Panc1 (cell line): ENCODE measurements at regions of chr5 and their contacts with region 1.

Region 1: DNA sequence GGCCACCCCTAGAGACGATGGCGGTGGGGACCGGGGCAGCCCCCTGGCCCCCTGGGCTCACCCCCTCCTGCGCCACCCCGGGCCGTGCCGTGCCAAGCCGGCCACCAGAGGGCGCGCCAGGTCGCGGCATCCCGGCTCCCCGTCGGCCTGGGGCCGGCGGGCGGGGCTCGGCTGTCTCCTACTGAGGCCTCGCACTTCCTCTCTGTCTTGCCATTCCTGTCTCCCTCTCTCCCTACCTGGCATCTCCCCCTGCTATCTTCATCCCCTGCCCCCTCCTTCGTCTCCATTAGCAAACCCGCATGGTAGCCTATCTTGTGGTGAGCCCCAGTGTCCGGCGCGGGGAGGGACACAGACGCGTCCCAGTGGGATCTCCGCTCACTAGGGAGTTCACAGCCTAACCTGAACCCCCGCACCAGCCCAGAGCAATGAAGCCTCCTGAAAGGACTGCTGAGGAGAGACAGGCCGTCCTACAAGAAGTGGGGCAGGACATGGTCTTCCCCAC is 29.8 kb upstream of the FABP6 start:
- DNase-seq: no peak
- ATAC-seq: peak; percentile 99
- H3K4me3 ChIP-seq: peak overlapping the region; percentile 42 to 62
- H3K27ac ChIP-seq: peak overlapping the region; percentile 80
- H3K4me1 ChIP-seq: peaks cover 4% of the 10 kb centered on the region
- H3K27me3 ChIP-seq: no peaks in the 10 kb centered on the region
- CTCF ChIP-seq: peak; percentile 98

Region 2: DNA sequence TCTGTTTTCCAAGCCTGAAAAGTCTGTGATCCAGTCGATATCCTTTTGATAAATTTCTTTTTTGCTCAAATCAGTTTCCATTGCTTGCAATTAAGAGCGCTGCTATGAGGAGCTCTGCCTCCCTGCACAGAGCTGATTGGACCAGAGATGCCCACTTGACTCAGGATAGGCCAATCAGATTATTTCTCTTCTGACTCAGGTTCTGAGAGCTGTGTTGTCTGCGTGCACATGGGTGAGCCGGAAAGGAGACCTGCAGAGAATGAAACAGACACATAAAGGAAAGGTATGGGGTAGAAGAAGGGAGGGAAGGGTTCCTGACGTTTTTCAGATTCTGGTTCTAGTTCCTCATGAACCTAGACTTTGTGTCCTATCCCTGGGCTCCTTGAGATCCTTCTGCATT is 14.1 kb after region 1 on chr5:
- CTCF ChIA-PET with region 1: no interaction called
- POLR2A ChIA-PET with region 1: interaction called, 12 read pairs
- in situ Hi-C with region 1: no loop called
- intact Hi-C with region 1: no loop called
- DNase-seq: no peak
- ATAC-seq: peak; percentile 47; the same call in 1 of the 2 replicates
- H3K4me3 ChIP-seq: no peak overlapping the region
- H3K27ac ChIP-seq: no peak overlapping the region
- H3K4me1 ChIP-seq: no peaks in the 10 kb centered on the region
- H3K27me3 ChIP-seq: no peaks in the 10 kb centered on the region
- CTCF ChIP-seq: no peak

Region 3: GRCh38 chr5:160342403-160342941 is 143.0 kb after region 1 on chr5:
- CTCF ChIA-PET with region 1: interaction called, 8 read pairs
- POLR2A ChIA-PET with region 1: no interaction called
- in situ Hi-C with region 1: no loop called
- intact Hi-C with region 1: loop called (anchors 1 kb)
- DNase-seq: no peak
- ATAC-seq: no peak; the same call in 1 of the 2 replicates
- H3K4me3 ChIP-seq: no peak overlapping the region
- H3K27ac ChIP-seq: no peak overlapping the region; the same call in 1 of the 2 replicates
- H3K4me1 ChIP-seq: peaks cover 4% of the 10 kb centered on the region
- H3K27me3 ChIP-seq: no peaks in the 10 kb centered on the region
- CTCF ChIP-seq: no peak

Region 4: DNA sequence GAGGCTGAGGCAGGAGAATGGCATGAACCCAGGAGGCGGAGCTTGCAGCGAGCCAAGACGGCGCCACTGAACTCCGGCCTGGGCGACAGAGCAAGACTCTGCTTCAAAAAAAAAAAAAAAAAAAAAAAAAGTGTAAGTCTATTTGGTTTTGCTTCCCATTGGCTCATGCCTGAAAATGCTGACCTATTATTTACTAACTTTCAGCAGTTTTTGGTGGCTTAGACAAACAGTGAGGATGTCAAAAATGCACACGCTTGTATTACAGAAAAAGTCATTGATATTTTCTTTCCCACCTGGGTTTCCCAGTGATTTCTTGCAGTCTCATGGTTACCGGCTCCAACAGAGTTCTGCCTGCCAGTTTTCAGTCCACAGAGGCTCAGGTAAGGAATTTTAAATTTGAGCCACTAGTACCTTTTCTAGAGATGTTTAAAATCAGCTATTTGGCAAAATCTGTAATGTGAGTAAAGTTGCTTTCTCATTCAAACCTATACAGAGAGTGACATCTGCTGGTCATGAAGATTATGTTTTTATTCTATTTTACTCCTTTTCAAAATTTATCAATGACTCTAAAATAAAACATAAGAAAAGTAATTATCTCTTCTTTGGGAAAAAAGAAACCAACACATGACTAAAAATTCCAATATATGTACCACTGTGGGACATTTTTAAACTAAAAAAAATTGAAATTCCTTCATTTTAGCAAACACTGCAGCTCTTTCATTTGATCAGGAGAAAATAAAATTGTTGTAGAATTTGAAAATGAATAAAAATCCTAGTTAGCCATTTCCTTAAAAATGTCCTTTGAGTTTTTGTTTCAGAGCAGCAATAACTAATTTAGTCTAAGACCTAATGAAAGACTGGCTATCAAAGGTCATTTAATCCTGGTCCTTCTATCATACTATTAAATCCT is 191.6 kb after region 1 on chr5:
- CTCF ChIA-PET with region 1: interaction called, 3 read pairs
- POLR2A ChIA-PET with region 1: interaction called, 3 read pairs
- in situ Hi-C with region 1: no loop called
- intact Hi-C with region 1: loop called (anchors 1 kb)
- DNase-seq: no peak
- ATAC-seq: no peak
- H3K4me3 ChIP-seq: no peak overlapping the region
- H3K27ac ChIP-seq: no peak overlapping the region
- H3K4me1 ChIP-seq: no peaks in the 10 kb centered on the region
- H3K27me3 ChIP-seq: no peaks in the 10 kb centered on the region
- CTCF ChIP-seq: peak; percentile 65; the same call in 1 of the 2 replicates